ENCODE measurements at regions of chr14 and their contacts with region 1.

Region 1: DNA sequence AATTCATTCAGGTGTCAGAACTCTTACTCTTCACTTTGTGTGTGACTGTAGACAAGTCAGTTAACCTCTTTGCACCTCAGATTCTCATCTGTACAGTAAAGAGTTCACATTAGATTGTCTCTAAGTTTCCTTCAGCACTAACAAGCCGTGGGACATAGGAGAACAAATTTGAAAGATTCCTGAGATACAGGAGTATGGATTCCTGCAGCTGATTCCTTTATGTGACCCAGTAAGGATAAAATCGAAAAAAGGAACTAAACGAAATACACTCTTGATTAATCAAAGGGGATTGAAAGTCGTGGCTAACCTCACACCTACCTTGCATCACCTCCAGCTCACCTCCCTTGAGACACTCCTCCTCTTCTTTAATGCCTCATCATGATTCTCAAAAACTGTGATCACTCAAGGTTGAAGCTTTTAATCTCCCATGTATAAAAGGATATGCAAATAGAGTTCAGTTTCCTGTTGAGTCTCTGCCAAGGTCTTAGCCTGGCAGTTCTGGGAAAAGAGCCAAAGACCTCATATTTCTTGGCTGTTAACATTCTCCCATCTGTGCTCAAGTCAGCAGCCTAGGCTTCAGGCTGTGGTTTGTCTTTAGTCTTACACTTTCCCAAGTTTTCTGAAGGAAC is 156.6 kb downstream of the DAD1 start:
- DNase-seq: peak; percentile 81
- H3K4me3 ChIP-seq: no peak overlapping the region
- CTCF ChIP-seq: no peak

Region 2: DNA sequence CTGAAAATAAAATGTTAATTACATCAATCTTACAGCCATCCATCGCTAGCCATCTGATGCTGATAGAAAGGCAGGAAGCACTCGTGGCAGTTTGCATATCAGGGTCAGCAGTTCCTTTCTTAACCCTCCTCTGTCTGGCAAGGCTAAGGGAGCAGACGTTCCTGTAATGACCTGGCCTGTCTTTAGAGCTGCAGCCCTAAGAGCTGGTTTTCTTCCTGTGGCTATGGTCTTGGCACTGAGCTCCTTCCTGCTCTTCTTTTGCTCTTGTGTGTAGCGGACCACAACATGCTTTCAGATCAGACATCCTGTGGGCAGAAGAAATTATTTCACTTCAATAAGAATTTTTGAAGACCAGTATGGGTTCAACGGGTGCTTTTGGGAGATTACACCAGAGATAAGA is 13.8 kb before region 1 on chr14:
- CTCF ChIA-PET with region 1: interaction called, 14 read pairs
- POLR2A ChIA-PET with region 1: no interaction called
- DNase-seq: no peak
- H3K4me3 ChIP-seq: no peak overlapping the region
- CTCF ChIP-seq: no peak

Region 3: GRCh38 chr14:22448905-22449599 is 16.6 kb after region 1 on chr14:
- CTCF ChIA-PET with region 1: interaction called, 14 read pairs
- POLR2A ChIA-PET with region 1: interaction called, 3 read pairs
- DNase-seq: no peak
- H3K4me3 ChIP-seq: no peak overlapping the region
- CTCF ChIP-seq: no peak

Measured in AG04449 (cell line).